ENCODE measurements at regions of chr1 and their contacts with region 1.

Region 1: GRCh38 chr1:162357681-162358266 is 18.9 kb downstream of the SPATA46 start:
- DNase-seq: no peak
- ATAC-seq: no peak
- H3K4me3 Mint-ChIP-seq: no peak overlapping the region
- H3K27ac Mint-ChIP-seq: no peak overlapping the region
- H3K4me1 Mint-ChIP-seq: peaks cover 6% of the 10 kb centered on the region
- H3K27me3 Mint-ChIP-seq: peaks cover 11% of the 10 kb centered on the region
- CTCF ChIP-seq: no peak

Region 2: DNA sequence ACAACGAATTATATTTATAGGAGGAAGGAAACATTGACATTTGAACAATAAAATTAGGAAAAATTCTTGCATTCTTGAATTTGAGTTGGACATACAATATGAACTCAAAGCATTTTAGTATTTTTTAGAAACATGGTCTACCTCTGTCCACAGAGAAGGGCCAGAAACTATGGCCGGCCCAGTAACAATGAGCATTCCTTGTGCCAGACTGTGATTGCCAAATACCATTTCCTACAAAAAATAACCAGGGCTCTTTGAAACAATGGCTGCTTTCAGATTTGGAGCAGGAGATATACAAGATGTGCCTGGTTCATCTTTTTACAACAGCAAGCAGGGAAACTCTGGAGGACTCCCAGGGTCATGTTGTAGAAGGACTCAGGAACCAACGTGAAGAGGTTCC is 249.9 kb before region 1 on chr1:
- CTCF ChIA-PET with region 1: no interaction called
- POLR2A ChIA-PET with region 1: no interaction called
- intact Hi-C with region 1: no loop called
- DNase-seq: no peak
- ATAC-seq: no peak
- H3K4me3 Mint-ChIP-seq: no peak overlapping the region
- H3K27ac Mint-ChIP-seq: no peak overlapping the region
- H3K4me1 Mint-ChIP-seq: no peaks in the 10 kb centered on the region
- H3K27me3 Mint-ChIP-seq: peaks cover 47% of the 10 kb centered on the region
- CTCF ChIP-seq: no peak

Region 3: DNA sequence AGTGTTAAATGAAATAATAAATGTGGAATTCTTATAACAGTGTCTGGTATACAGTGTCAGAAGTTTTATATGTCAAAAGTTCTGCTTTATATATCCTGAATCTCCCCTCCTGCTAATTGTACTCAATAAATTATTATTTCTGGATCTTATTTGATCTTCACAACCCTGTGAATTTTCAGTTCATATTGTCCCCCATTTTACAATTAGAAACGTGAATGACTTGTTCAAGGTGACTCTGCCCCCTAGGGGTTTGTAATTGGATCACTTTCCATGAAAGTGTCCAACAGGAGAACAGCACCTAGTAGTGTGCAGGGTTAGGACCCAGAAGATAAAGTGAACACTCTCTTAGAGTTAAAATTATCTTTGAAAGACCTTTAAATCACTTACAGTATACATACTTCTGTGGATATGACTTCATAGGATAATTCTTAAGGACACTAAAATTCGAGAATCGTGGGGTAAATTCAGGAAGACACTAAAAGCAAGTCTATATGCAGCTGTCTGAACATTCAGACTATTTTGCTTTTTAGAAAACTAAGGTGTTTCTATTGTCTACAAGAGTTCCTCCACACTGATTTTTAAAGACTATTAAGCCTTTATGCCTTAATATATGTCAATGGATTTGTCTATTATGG is 270.0 kb after region 1 on chr1:
- CTCF ChIA-PET with region 1: no interaction called
- POLR2A ChIA-PET with region 1: no interaction called
- intact Hi-C with region 1: loop called (anchors 5 kb)
- DNase-seq: no peak
- ATAC-seq: no peak
- H3K4me3 Mint-ChIP-seq: no peak overlapping the region
- H3K27ac Mint-ChIP-seq: no peak overlapping the region
- H3K4me1 Mint-ChIP-seq: no peaks in the 10 kb centered on the region
- H3K27me3 Mint-ChIP-seq: peaks cover 27% of the 10 kb centered on the region
- CTCF ChIP-seq: no peak